Activated CD8-positive, alpha-beta memory T cell treated with anti-CD3 and anti-CD28 coated beads, Interleukin-2, amount 10 ng/mL, durations not matched to agents 7 days and 5 days (primary cell): ENCODE measurements at regions of chr1 and their contacts with region 1.

Region 1: GRCh38 chr1:76154206-76154956 is 79.8 kb downstream of the ST6GALNAC3 start:
- DNase-seq: peak; percentile 86
- ATAC-seq: peak; percentile 94
- H3K4me3 Mint-ChIP-seq: peak overlapping the region; percentile 80
- H3K27ac Mint-ChIP-seq: peak overlapping the region; percentile 94
- H3K4me1 Mint-ChIP-seq: peaks cover 14% of the 10 kb centered on the region
- H3K27me3 Mint-ChIP-seq: peaks cover 2% of the 10 kb centered on the region

Region 2: DNA sequence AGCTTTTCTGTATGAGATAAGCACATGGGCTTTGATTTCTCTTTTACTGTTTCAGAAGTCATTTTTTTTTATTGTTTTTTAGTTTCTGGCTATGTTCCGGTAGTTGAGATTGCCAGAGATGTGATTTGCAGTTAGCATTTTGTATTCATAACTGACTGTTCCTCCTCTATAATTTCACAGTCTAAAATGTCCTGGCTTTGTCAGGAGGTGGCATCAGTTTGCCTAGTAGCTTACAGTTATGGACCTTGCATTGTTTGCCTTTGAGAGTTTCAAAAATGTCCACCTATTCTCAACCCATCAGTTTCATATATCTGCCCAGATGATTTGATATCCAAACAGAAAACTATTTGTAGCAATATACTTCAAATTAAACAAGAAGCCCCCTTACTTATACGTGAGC is 119.3 kb before region 1 on chr1:
- CTCF ChIA-PET with region 1: no interaction called
- DNase-seq: no peak
- ATAC-seq: no peak
- H3K4me3 Mint-ChIP-seq: no peak overlapping the region
- H3K27ac Mint-ChIP-seq: no peak overlapping the region
- H3K4me1 Mint-ChIP-seq: no peaks in the 10 kb centered on the region
- H3K27me3 Mint-ChIP-seq: peaks cover 11% of the 10 kb centered on the region

Region 3: GRCh38 chr1:76294482-76295194 is 140.3 kb after region 1 on chr1:
- CTCF ChIA-PET with region 1: interaction called, 12 read pairs
- DNase-seq: no peak
- ATAC-seq: peak; percentile 76
- H3K4me3 Mint-ChIP-seq: peak overlapping the region; percentile 70
- H3K27ac Mint-ChIP-seq: peak overlapping the region; percentile 82
- H3K4me1 Mint-ChIP-seq: peaks cover 45% of the 10 kb centered on the region
- H3K27me3 Mint-ChIP-seq: peaks cover 2% of the 10 kb centered on the region